Heart left ventricle (tissue), 16 donors: ENCODE measurements at regions of chr19 and their contacts with region 1.

Region 1: DNA sequence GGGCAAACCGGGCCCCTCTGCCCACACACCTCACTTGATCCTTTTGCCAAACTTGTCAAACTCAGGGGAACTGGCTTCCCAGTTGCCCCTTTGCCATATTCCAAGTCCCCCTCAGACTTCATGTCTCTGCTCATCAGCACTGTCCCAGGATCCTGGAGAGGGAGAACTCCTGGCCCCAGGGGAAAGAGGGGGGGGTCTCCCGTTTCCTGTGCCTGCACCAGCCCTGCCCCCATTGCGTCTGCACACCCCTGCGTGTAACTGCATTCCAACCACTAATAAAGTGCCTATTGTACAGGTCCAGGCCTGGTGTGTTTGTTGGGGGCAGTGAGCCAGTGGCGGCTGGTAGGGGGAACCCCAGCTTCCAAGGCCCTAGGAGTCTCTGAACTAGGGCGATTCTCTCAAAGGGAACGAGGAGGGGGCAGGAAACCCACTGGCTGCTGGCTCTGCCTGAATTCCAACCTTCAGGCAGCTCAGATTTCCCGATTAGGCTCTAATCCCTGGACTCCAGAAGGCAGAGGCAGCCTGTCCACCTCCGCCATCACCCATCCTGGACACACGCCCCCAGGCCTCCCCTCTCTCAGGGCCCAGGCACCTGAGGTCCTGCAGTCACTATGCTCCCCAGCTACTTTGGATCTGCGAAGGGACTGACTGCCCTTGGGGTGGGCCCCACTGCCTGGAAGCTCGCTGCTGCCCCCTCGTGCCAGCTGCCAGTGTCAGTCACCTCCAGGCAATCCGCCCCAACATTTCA is 9.7 kb upstream of the ILF3 start:
- DNase-seq: peak; percentile 81 to 91 (median 88)
- ATAC-seq: peak; percentile 77 to 93 (median 90)
- H3K4me3 ChIP-seq: no peak overlapping the region
- H3K27ac ChIP-seq: peak overlapping the region; percentile 17 to 79 (median 54)
- H3K4me1 ChIP-seq: peaks cover 0 to 45% (median 19%) of the 10 kb centered on the region in 12 donors
- H3K27me3 ChIP-seq: no peaks in the 10 kb centered on the region
- CTCF ChIP-seq: peak; percentile 84 to 92 (median 90)
- POLR2A ChIP-seq: no peak

Region 2: DNA sequence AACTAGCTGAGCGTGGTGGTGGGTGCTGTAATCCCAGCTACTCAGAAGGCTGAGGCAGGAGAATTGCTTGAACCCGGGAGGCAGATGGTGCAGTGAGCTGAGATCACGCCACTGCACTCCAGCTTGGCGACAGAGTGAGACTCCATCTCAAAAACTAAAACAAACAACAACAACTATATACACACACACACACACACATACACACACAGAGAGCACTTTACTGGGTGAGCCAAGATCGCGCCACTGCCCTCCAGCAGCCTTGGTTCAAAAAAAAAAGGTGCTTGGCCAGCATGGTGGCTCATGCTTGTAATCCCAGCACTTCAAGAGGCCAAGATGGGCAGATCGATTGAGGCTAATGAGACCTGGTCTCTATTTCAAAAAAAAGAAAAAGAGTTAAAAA is 47.4 kb before region 1 on chr19:
- intact Hi-C with region 1: loop called in 2 of 10 experiments (anchors 5 kb)
- DNase-seq: no peak
- ATAC-seq: no peak
- H3K4me3 ChIP-seq: no peak overlapping the region
- H3K27ac ChIP-seq: peak overlapping the region in 8 of 12 donors; percentile 4 to 63 (median 44)
- H3K4me1 ChIP-seq: peaks cover 0 to 38% (median 6%) of the 10 kb centered on the region in 12 donors
- H3K27me3 ChIP-seq: no peaks in the 10 kb centered on the region
- CTCF ChIP-seq: no peak
- POLR2A ChIP-seq: no peak

Region 3: GRCh38 chr19:10602330-10603083 is 41.9 kb before region 1 on chr19:
- intact Hi-C with region 1: loop called in 2 of 10 experiments (anchors 5 kb)
- DNase-seq: peak; percentile 87 to 93 (median 89)
- ATAC-seq: peak; percentile 87 to 99 (median 96)
- H3K4me3 ChIP-seq: peak overlapping the region; percentile 88 to 100 (median 100)
- H3K27ac ChIP-seq: peak overlapping the region; percentile 91 to 99 (median 97)
- H3K4me1 ChIP-seq: peaks cover 0 to 36% (median 22%) of the 10 kb centered on the region in 12 donors
- H3K27me3 ChIP-seq: no peaks in the 10 kb centered on the region
- CTCF ChIP-seq: no peak
- POLR2A ChIP-seq: peak in 1 of 2 donors; percentile 75